ENCODE measurements at regions of chr17 and their contacts with region 1.

Region 1: GRCh38 chr17:57892146-57892828 is 42.4 kb upstream of the MRPS23 start:
- DNase-seq: peak; percentile 72 to 86 (median 79)
- H3K4me3 ChIP-seq: peak overlapping the region in 18 of 59 donors; percentile 25 to 54 (median 42)
- H3K27ac ChIP-seq: peak overlapping the region; percentile 72 to 100 (median 95)
- H3K27me3 ChIP-seq: no peaks in the 10 kb centered on the region
- CTCF ChIP-seq: peak; percentile 77 to 98 (median 93)

Region 2: DNA sequence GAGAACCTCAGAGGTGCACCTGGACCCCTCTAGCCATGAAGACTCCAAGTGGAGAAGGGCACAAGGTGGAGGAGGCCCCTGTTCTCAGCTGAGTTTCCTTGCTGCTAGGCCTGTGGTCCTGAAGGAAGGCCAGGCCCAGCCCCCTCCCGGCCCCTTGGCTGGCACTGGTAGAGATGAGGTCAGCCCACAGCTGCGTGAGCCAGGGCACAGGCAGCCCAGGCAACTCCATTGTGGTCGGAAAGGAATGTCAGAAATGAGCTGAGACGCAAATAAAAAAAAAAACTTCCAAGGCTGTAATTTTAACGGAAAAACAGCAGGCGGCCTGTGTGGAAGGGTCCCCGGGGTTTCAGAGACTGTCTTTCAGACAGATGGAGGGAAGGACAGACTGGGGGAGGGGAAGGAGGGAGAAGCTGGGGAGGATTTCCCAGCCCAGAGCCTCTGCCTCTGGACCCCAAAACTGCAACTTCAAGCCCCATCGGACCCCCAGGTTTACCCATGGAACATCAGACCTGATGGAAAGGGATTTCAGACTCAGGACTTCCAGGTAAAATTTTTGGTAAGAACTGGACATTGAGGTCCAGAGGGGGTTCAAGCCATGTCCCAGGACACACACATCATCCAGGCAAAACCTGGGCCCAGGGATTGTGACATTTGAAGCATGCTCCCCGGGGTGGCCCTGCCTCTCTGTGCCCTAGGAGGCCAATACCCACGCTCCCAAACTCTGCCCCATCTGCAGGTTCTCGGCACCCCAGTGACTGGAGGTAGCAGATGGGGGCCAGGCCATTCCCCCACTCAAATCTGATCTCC is 16.8 kb before region 1 on chr17:
- intact Hi-C with region 1: loop called in 1 of 2 experiments (anchors 2 kb)
- DNase-seq: peak; percentile 34 to 85 (median 82)
- H3K4me3 ChIP-seq: peak overlapping the region in 21 of 59 donors; percentile 3 to 57 (median 43)
- H3K27ac ChIP-seq: peak overlapping the region; percentile 63 to 99 (median 94)
- H3K27me3 ChIP-seq: no peaks in the 10 kb centered on the region
- CTCF ChIP-seq: peak in 26 of 56 donors; percentile 7 to 45 (median 20)

Region 3: GRCh38 chr17:57987580-57988421 is 95.5 kb after region 1 on chr17 and contains the start of gene VEZF1:
- intact Hi-C with region 1: loop called (anchors 5 to 10 kb)
- DNase-seq: peak; percentile 51 to 82 (median 68)
- H3K4me3 ChIP-seq: peak within 1 kb of the TSS; percentile 61 to 98 (median 87)
- H3K27ac ChIP-seq: peak within 1 kb of the TSS; percentile 86 to 100 (median 98)
- H3K27me3 ChIP-seq: no peaks in the 10 kb centered on the region
- CTCF ChIP-seq: peak in 9 of 56 donors; percentile 5 to 20 (median 11)
- total RNA-seq, gene VEZF1: 29.6 to 117 (median 50.6) TPM

Region 4: DNA sequence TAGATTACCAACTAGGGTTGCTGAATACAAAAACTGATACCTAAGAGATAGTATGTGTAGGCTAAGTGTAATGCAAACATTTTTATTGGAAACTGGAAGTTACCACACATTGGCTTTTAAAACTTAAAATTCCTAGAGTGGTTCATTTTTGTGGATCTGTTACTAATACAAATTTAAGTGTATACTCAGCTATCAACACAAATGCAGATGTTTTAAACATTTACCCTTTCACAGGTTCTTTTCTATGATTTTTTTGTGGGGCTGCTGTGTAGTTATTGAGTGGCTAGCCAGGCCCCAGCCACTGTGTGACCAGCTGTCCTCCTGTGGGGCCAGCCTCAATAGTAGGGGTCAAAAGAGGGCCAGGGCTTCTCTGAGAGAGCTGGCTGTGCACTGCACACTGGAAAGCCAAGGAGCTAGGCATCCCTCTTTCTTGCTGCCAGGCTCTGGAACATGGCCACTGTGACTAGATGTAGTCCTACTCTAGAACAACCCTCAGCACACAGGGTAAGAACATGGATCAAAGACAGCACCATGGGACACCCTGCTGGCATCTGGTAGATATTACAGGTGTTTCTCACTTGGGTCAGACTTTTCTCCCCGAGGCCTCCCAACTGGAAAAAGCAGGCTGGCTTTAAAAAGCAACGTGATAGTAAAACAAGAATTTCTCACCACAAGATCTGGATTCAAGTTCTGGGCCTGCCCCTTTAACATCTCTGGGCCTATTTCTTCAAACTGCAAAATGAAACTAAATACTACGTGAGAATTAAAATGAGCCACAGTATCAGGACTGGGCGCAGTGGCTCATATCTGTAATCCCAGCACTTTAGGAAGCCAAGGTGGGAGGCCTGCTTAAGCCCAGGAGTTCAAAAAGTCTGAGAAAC is 103.0 kb after region 1 on chr17:
- intact Hi-C with region 1: loop called in 1 of 2 experiments (anchors 10 kb)
- DNase-seq: peak in 9 of 10 donors; percentile 9 to 77 (median 61)
- H3K4me3 ChIP-seq: peak overlapping the region in 1 of 59 donors; percentile 21
- H3K27ac ChIP-seq: peak overlapping the region in 57 of 59 donors; percentile 11 to 92 (median 75)
- H3K27me3 ChIP-seq: no peaks in the 10 kb centered on the region
- CTCF ChIP-seq: peak; percentile 37 to 87 (median 72)